ENCODE measurements at regions of chr18 and their contacts with region 1.

Region 1: GRCh38 chr18:74291771-74292540 is at the start of gene CYB5A:
- DNase-seq: peak; percentile 97 to 99 (median 98)
- ATAC-seq: peak; percentile 99
- H3K4me3 ChIP-seq: peak within 1 kb of the TSS; percentile 91
- H3K4me3 Mint-ChIP-seq: peak within 1 kb of the TSS in 2 of 10 donors; percentile 92 to 94
- H3K27ac ChIP-seq: peak within 1 kb of the TSS; percentile 72
- H3K27ac Mint-ChIP-seq: peak within 1 kb of the TSS in 8 of 9 donors; percentile 56 to 95 (median 87)
- H3K4me1 ChIP-seq: peaks cover 0 to 3% of the 10 kb centered on the region in 2 donors
- H3K4me1 Mint-ChIP-seq: peaks cover 0 to 30% (median 15%) of the 10 kb centered on the region in 7 donors
- H3K27me3 ChIP-seq: no peaks in the 10 kb centered on the region
- H3K27me3 Mint-ChIP-seq: peaks cover 0 to 12% (median 0%) of the 10 kb centered on the region in 5 donors
- total RNA-seq, gene CYB5A: 13.9 to 36.9 (median 22.6) TPM

Region 2: GRCh38 chr18:74139888-74140287 is 152.1 kb before region 1 on chr18:
- CTCF ChIA-PET with region 1: no interaction called
- POLR2A ChIA-PET with region 1: no interaction called
- intact Hi-C with region 1: no loop called
- DNase-seq: no peak
- ATAC-seq: no peak
- H3K4me3 ChIP-seq: no peak overlapping the region
- H3K4me3 Mint-ChIP-seq: peak overlapping the region in 1 of 10 donors; percentile 27
- H3K27ac ChIP-seq: no peak overlapping the region
- H3K27ac Mint-ChIP-seq: peak overlapping the region in 1 of 9 donors; percentile 64
- H3K4me1 ChIP-seq: no peaks in the 10 kb centered on the region
- H3K4me1 Mint-ChIP-seq: peaks cover 0 to 20% (median 0%) of the 10 kb centered on the region in 7 donors
- H3K27me3 ChIP-seq: no peaks in the 10 kb centered on the region
- H3K27me3 Mint-ChIP-seq: peaks cover 2 to 15% (median 6%) of the 10 kb centered on the region in 5 donors

Region 3: DNA sequence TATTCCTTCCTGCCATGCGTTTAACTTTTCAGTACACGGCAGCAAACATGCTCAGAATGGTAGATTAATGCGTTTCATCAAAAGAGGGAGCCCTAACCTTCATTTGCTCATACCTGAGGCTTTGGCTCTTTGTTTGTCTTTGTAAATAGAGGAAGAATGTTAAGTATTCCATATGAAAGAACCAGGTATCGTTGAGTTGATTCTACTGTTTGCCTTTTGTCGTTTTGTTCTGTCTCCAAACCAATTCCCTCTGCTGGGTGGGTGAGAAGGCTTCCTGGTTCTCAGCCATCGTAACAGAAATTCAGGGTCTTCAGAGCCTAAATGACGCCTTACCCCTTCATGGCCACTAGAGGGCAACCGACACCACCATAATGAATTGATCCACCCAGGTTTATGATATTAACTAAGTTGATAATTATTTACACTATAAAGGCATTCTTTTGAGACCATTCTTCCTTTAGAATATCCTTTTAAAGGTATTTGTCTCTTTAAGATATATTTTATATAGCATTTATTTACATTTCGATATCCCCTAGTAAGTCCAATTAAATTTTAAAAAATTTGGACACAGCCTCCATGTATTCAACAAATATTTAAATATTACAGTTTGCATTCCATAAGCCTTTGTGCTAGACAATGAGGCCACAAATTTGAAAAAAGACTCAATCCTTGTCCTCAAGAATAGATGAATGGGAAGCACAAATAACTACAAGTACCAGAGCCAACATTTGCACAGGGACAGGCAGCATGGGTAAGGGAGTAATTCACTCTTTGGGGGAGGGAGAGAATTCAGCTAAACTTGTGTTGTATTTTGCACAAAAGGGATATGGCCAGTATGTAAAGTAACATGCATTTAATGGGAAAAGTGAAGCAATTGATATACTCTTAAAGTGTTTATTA is 95.5 kb before region 1 on chr18:
- CTCF ChIA-PET with region 1: no interaction called
- POLR2A ChIA-PET with region 1: no interaction called
- intact Hi-C with region 1: loop called (anchors 1 to 5 kb)
- DNase-seq: peak in 7 of 9 donors; percentile 51 to 80 (median 71)
- ATAC-seq: peak; percentile 95
- H3K4me3 ChIP-seq: peak overlapping the region; percentile 55
- H3K4me3 Mint-ChIP-seq: peak overlapping the region; percentile 63 to 90 (median 86)
- H3K27ac ChIP-seq: peak overlapping the region; percentile 63
- H3K27ac Mint-ChIP-seq: peak overlapping the region in 8 of 9 donors; percentile 51 to 90 (median 79)
- H3K4me1 ChIP-seq: no peaks in the 10 kb centered on the region
- H3K4me1 Mint-ChIP-seq: peaks cover 0 to 7% (median 0%) of the 10 kb centered on the region in 7 donors
- H3K27me3 ChIP-seq: no peaks in the 10 kb centered on the region
- H3K27me3 Mint-ChIP-seq: peaks cover 1 to 11% (median 2%) of the 10 kb centered on the region in 5 donors

Region 4: GRCh38 chr18:74353169-74353775 is 61.3 kb after region 1 on chr18:
- CTCF ChIA-PET with region 1: no interaction called
- POLR2A ChIA-PET with region 1: no interaction called
- intact Hi-C with region 1: loop called in 1 of 2 experiments (anchors 5 kb)
- DNase-seq: peak in 8 of 9 donors; percentile 37 to 79 (median 70)
- ATAC-seq: peak; percentile 82
- H3K4me3 ChIP-seq: no peak overlapping the region
- H3K4me3 Mint-ChIP-seq: no peak overlapping the region
- H3K27ac ChIP-seq: no peak overlapping the region
- H3K27ac Mint-ChIP-seq: peak overlapping the region in 2 of 9 donors; percentile 58 to 89
- H3K4me1 ChIP-seq: peaks cover 0 to 4% of the 10 kb centered on the region in 2 donors
- H3K4me1 Mint-ChIP-seq: peaks cover 3 to 23% (median 18%) of the 10 kb centered on the region in 7 donors
- H3K27me3 ChIP-seq: no peaks in the 10 kb centered on the region
- H3K27me3 Mint-ChIP-seq: peaks cover 0 to 24% (median 0%) of the 10 kb centered on the region in 5 donors

Region 5: DNA sequence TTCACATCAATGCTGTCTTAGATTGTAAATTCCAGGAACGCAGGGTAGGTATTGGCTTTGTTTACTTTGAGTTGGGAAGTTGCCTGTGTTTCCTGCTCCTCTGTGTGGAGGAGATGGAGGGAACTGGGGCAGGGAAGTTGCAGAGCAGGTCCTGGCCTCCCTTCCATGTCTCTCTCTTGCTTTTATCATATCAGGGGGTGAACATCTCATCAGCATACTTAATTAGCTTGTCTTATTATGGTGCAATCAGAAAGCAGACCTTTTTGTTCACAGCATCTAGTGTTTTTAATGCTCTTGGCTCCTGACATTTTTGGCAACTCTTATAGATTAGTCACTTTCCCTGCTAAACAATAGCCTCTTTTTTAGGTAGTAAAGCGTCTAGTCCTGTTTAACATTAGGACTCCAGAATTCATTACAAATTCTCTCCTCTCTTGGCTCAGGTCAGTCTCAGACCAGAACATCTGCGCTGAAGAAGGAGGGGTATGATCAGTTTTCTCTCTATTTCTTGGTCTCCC is 176.6 kb after region 1 on chr18:
- CTCF ChIA-PET with region 1: no interaction called
- POLR2A ChIA-PET with region 1: no interaction called
- intact Hi-C with region 1: no loop called
- DNase-seq: no peak
- ATAC-seq: no peak
- H3K4me3 ChIP-seq: no peak overlapping the region
- H3K4me3 Mint-ChIP-seq: no peak overlapping the region
- H3K27ac ChIP-seq: no peak overlapping the region
- H3K27ac Mint-ChIP-seq: no peak overlapping the region
- H3K4me1 ChIP-seq: no peaks in the 10 kb centered on the region
- H3K4me1 Mint-ChIP-seq: peaks cover 0 to 15% (median 0%) of the 10 kb centered on the region in 7 donors
- H3K27me3 ChIP-seq: no peaks in the 10 kb centered on the region
- H3K27me3 Mint-ChIP-seq: peaks cover 0 to 29% (median 0%) of the 10 kb centered on the region in 5 donors

Region 6: GRCh38 chr18:74551936-74552555 is 260.1 kb after region 1 on chr18:
- CTCF ChIA-PET with region 1: no interaction called
- POLR2A ChIA-PET with region 1: no interaction called
- intact Hi-C with region 1: loop called in 1 of 2 experiments (anchors 5 kb)
- DNase-seq: peak; percentile 39 to 69 (median 63)
- ATAC-seq: peak; percentile 97
- H3K4me3 ChIP-seq: no peak overlapping the region
- H3K4me3 Mint-ChIP-seq: no peak overlapping the region
- H3K27ac ChIP-seq: no peak overlapping the region
- H3K27ac Mint-ChIP-seq: peak overlapping the region in 2 of 9 donors; percentile 3 to 70
- H3K4me1 ChIP-seq: no peaks in the 10 kb centered on the region
- H3K4me1 Mint-ChIP-seq: peaks cover 0 to 6% (median 0%) of the 10 kb centered on the region in 7 donors
- H3K27me3 ChIP-seq: no peaks in the 10 kb centered on the region
- H3K27me3 Mint-ChIP-seq: peaks cover 10 to 14% (median 13%) of the 10 kb centered on the region in 5 donors